GM23248 (cell line): ENCODE measurements at regions of chr11 and their contacts with region 1.

Region 1: DNA sequence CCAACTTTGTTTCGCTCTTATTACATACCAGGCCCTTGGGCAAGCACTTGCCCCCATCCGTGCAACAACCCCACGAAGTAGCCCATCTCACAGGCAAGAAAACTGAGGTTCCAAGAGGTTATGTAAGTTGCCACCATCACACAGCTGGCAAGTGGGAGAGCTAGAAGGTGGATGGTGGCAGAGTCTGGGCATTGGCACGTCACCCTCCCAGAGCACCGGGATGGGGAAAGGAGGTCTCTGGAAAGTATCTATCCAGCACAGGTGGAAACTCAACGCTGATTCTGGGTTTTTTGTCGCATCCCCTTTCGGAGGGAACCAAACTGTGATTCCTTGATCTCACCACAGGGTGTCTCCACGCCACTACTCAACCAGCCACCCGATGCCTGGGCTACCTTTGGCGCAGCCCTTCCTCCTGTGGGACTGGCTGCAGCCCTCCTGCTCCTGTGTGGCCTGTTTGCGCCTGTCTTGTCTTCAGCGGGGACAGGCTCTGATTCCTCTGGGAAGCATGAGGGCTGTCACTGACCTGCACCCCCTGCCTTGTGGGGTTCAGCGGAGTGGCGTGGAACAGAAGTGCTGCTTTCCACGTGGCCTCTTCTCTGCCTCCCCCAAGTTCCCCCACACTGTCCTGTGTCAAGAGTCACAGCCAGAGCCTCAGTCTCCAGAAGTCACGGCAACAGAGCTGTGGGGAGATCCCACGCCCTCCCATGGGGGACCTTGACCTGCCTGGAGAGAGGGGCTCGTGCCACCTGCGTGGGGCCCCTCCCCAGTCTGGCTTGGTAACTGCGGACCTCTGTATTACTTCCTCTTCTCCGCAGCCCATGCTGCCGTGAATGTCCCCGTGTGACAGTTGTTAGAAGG is 34.4 kb upstream of the TRIM29 start:
- DNase-seq: peak; percentile 87
- H3K4me3 ChIP-seq: no peak overlapping the region
- H3K27ac ChIP-seq: no peak overlapping the region
- H3K4me1 ChIP-seq: no peaks in the 10 kb centered on the region; the same call in 1 of the 2 replicates
- H3K27me3 ChIP-seq: peaks cover 6% of the 10 kb centered on the region; the same call in 1 of the 2 replicates

Region 2: GRCh38 chr11:119641983-119642745 is 530.1 kb before region 1 on chr11:
- in situ Hi-C with region 1: no loop called
- DNase-seq: peak; percentile 22
- H3K4me3 ChIP-seq: no peak overlapping the region
- H3K27ac ChIP-seq: no peak overlapping the region
- H3K4me1 ChIP-seq: no peaks in the 10 kb centered on the region
- H3K27me3 ChIP-seq: no peaks in the 10 kb centered on the region; the same call in 1 of the 2 replicates

Region 3: GRCh38 chr11:119932828-119933562 is 239.3 kb before region 1 on chr11:
- in situ Hi-C with region 1: no loop called
- DNase-seq: no peak
- H3K4me3 ChIP-seq: no peak overlapping the region
- H3K27ac ChIP-seq: no peak overlapping the region
- H3K4me1 ChIP-seq: no peaks in the 10 kb centered on the region
- H3K27me3 ChIP-seq: peaks cover 57% of the 10 kb centered on the region; the same call in 1 of the 2 replicates

Region 4: GRCh38 chr11:120121871-120122473 is 50.3 kb before region 1 on chr11:
- in situ Hi-C with region 1: no loop called
- DNase-seq: no peak
- H3K4me3 ChIP-seq: no peak overlapping the region
- H3K27ac ChIP-seq: no peak overlapping the region
- H3K4me1 ChIP-seq: peaks cover 9% of the 10 kb centered on the region
- H3K27me3 ChIP-seq: no peaks in the 10 kb centered on the region

Region 5: GRCh38 chr11:120229451-120230424 is 57.5 kb after region 1 on chr11:
- in situ Hi-C with region 1: loop called (anchors 5 kb)
- DNase-seq: peak; percentile 52
- H3K4me3 ChIP-seq: no peak overlapping the region
- H3K27ac ChIP-seq: no peak overlapping the region
- H3K4me1 ChIP-seq: no peaks in the 10 kb centered on the region
- H3K27me3 ChIP-seq: peaks cover 3% of the 10 kb centered on the region; the same call in 1 of the 2 replicates

Region 6: GRCh38 chr11:120254788-120255518 is 82.7 kb after region 1 on chr11:
- in situ Hi-C with region 1: no loop called
- DNase-seq: no peak
- H3K4me3 ChIP-seq: no peak overlapping the region
- H3K27ac ChIP-seq: no peak overlapping the region
- H3K4me1 ChIP-seq: no peaks in the 10 kb centered on the region
- H3K27me3 ChIP-seq: peaks cover 63% of the 10 kb centered on the region

Region 7: GRCh38 chr11:120295084-120295483 is 122.8 kb after region 1 on chr11:
- in situ Hi-C with region 1: loop called (anchors 5 kb)
- DNase-seq: no peak
- H3K4me3 ChIP-seq: no peak overlapping the region
- H3K27ac ChIP-seq: no peak overlapping the region
- H3K4me1 ChIP-seq: no peaks in the 10 kb centered on the region
- H3K27me3 ChIP-seq: peaks cover 47% of the 10 kb centered on the region